CD4-positive, alpha-beta T cell (primary cell): ENCODE measurements at regions of chr3 and their contacts with region 1.

Region 1: GRCh38 chr3:53865732-53866499 is 16.0 kb downstream of the ACTR8 start:
- DNase-seq: no peak
- ATAC-seq: no peak
- H3K4me3 ChIP-seq: no peak overlapping the region
- H3K4me3 Mint-ChIP-seq: no peak overlapping the region
- H3K27ac ChIP-seq: no peak overlapping the region
- H3K27ac Mint-ChIP-seq: no peak overlapping the region
- H3K4me1 ChIP-seq: no peaks in the 10 kb centered on the region
- H3K4me1 Mint-ChIP-seq: no peaks in the 10 kb centered on the region
- H3K27me3 ChIP-seq: no peaks in the 10 kb centered on the region
- H3K27me3 Mint-ChIP-seq: no peaks in the 10 kb centered on the region
- CTCF ChIP-seq: no peak

Region 2: GRCh38 chr3:53913401-53913800 is 47.5 kb after region 1 on chr3:
- CTCF ChIA-PET with region 1: no interaction called
- POLR2A ChIA-PET with region 1: no interaction called
- intact Hi-C with region 1: loop called in 1 of 2 experiments (anchors 5 kb)
- DNase-seq: no peak
- ATAC-seq: no peak
- H3K4me3 ChIP-seq: no peak overlapping the region
- H3K4me3 Mint-ChIP-seq: no peak overlapping the region
- H3K27ac ChIP-seq: no peak overlapping the region
- H3K27ac Mint-ChIP-seq: no peak overlapping the region
- H3K4me1 ChIP-seq: no peaks in the 10 kb centered on the region
- H3K4me1 Mint-ChIP-seq: no peaks in the 10 kb centered on the region
- H3K27me3 ChIP-seq: peaks cover 0 to 25% of the 10 kb centered on the region in 2 experiments
- H3K27me3 Mint-ChIP-seq: peaks cover 74% of the 10 kb centered on the region
- CTCF ChIP-seq: no peak